ENCODE measurements at regions of chr20 and their contacts with region 1.

Region 1: DNA sequence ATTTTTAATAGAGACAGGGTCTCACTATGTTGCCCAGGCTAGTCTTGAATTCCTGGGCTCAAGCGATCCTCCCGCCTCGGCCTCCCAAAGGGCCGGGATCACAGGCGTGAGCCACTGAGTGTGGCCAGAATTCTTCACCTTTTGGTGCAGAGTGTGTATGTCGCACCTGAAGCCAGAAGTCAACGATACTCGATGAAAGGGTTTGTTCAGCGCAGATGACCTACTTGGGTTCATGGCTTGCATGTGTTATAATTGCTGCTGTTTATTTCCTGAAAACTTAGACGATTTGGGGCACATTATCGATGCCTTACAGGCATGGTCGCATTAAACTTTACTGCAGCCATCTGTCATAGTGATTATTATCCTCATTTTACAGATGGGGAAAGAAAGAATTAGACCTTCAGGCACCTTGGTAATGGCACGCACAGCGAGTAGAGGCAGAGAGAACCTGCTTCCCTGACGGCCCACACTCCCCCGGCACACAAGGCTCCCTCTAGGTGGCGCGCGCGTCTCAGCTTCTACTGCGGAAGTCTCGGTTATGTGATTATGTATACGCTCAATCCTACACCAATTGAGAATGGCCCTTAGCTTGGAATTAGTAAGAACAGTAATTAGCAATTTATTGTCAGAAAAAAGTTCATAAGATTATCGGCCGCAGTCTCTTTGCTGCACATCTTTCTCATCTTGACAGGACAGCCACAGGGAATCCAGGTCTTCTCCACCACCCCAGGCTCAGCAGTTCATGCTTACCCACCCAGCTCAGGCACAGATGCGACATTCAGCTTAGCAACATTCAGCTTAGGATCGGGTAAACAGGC is 212.8 kb upstream of the PROKR2 start:
- DNase-seq: peak; percentile 71
- H3K4me3 ChIP-seq: no peak overlapping the region
- H3K27ac ChIP-seq: no peak overlapping the region
- H3K4me1 ChIP-seq: no peaks in the 10 kb centered on the region
- H3K27me3 ChIP-seq: no peaks in the 10 kb centered on the region
- CTCF ChIP-seq: peak; percentile 92 to 97

Region 2: GRCh38 chr20:5397393-5397792 is 132.1 kb before region 1 on chr20:
- CTCF ChIA-PET with region 1: interaction called, 10 read pairs
- dilution Hi-C with region 1: no loop called
- in situ Hi-C with region 1: no loop called
- intact Hi-C with region 1: no loop called
- DNase-seq: peak; percentile 30
- H3K4me3 ChIP-seq: no peak overlapping the region
- H3K27ac ChIP-seq: no peak overlapping the region
- H3K4me1 ChIP-seq: no peaks in the 10 kb centered on the region
- H3K27me3 ChIP-seq: no peaks in the 10 kb centered on the region
- CTCF ChIP-seq: no peak

Region 3: DNA sequence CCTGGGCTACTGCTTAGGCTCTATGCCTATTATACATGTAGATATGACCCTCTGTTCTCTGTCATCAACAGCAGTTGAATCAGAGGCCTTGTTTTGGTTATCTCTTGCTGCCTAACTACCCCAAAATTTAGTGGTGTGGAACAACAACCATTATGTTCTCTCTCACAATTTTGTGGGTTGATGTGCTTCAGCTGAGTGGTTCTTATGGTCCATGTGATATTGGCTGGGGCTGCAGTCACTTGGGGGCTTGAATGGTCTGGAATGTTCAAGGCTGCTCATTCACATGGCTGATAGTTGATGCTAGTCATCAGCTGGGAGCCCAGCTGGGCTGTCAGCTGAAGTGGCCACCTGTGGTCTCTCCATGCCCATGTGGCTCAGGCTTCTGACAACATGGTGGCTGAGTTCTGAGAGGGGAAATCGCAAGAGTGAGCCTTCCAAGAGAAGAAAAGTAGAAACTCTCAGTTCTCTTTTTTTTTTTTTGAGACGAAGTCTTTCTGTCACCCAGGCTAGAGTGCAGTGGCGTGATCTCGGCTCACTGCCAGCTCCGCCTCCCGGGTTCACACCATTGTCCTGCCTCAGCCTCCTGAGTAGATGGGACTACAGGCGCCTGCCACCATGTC is 268.4 kb after region 1 on chr20:
- CTCF ChIA-PET with region 1: no interaction called
- dilution Hi-C with region 1: no loop called
- in situ Hi-C with region 1: loop called in 1 of 2 experiments (anchors 10 kb)
- intact Hi-C with region 1: no loop called
- DNase-seq: no peak
- H3K4me3 ChIP-seq: no peak overlapping the region
- H3K27ac ChIP-seq: no peak overlapping the region
- H3K4me1 ChIP-seq: no peaks in the 10 kb centered on the region
- H3K27me3 ChIP-seq: no peaks in the 10 kb centered on the region
- CTCF ChIP-seq: no peak

Region 4: GRCh38 chr20:5950271-5951031 is 420.9 kb after region 1 on chr20 and contains the starts of genes MCM8 and TRMT6:
- CTCF ChIA-PET with region 1: interaction called, 15 read pairs
- dilution Hi-C with region 1: no loop called
- in situ Hi-C with region 1: loop called in 1 of 2 experiments (anchors 25 kb)
- intact Hi-C with region 1: no loop called
- DNase-seq: peak; percentile 96
- H3K4me3 ChIP-seq: peak within 1 kb of the TSS; percentile 62 to 86 (median 72)
- H3K27ac ChIP-seq: peak within 1 kb of the TSS; percentile 75
- H3K4me1 ChIP-seq: peaks cover 22% of the 10 kb centered on the region
- H3K27me3 ChIP-seq: no peaks in the 10 kb centered on the region
- CTCF ChIP-seq: no peak
- total RNA-seq, gene MCM8: 4.5 to 12.5 TPM
- total RNA-seq, gene TRMT6: 12.8 to 24.9 TPM

Region 5: GRCh38 chr20:6074145-6074561 is 544.6 kb after region 1 on chr20:
- CTCF ChIA-PET with region 1: no interaction called
- dilution Hi-C with region 1: no loop called
- in situ Hi-C with region 1: no loop called
- intact Hi-C with region 1: loop called (anchors 1 kb)
- DNase-seq: no peak
- H3K4me3 ChIP-seq: no peak overlapping the region
- H3K27ac ChIP-seq: no peak overlapping the region
- H3K4me1 ChIP-seq: no peaks in the 10 kb centered on the region
- H3K27me3 ChIP-seq: no peaks in the 10 kb centered on the region
- CTCF ChIP-seq: peak; percentile 13 to 30